ENCODE measurements at regions of chr5 and their contacts with region 1.

Region 1: GRCh38 chr5:82165740-82166530 is 112.2 kb downstream of the RPS23 start:
- DNase-seq: peak; percentile 86 to 87
- ATAC-seq: peak; percentile 100
- H3K4me3 ChIP-seq: no peak overlapping the region
- H3K27ac ChIP-seq: peak overlapping the region; percentile 51 to 76 (median 72)
- H3K4me1 ChIP-seq: peaks cover 14 to 25% of the 10 kb centered on the region in 2 donors
- H3K27me3 ChIP-seq: no peaks in the 10 kb centered on the region
- CTCF ChIP-seq: peak; percentile 65 to 78 (median 70)
- POLR2A ChIP-seq: no peak

Region 2: DNA sequence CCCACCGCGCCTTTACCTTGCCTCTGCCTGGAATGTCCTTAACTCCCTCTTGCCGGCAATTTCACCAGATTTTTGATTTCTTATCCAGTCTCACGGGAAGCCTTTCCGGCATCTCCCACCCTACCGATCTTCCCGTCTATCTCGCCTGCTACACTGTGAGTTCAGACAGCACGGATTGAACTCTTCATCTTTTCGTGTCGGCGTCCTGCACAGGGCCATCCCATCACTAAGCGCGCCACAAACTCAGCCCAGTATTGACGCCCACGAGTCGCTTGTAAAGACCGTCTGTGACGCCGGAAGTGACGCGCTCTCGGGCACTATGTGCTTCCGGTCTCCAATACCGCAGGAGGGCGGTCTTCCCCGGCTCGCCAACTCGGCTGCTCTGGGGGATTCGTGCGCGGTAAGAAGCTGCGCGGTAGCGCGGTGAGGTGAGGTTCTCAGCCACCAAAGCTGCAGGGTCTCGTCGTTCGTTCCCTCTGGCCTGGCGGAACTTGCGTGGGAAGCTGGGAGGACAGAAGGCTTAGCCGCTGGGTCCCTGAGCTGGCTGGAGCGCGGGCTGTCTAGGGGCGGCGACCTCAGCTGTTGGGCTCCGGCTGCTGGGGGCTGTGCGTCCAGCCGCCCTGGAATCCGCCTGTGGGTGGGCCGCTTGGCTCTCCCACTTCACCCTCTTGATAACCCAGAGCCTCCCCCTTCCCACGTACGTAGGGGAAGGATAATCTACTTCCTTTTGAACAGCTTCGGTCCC is 864.5 kb before region 1 on chr5 and contains the start of gene ZCCHC9:
- in situ Hi-C with region 1: no loop called
- intact Hi-C with region 1: loop called (anchors 5 kb)
- DNase-seq: peak; percentile 89
- ATAC-seq: peak; percentile 97 to 98
- H3K4me3 ChIP-seq: peak within 1 kb of the TSS; percentile 83 to 96 (median 87)
- H3K27ac ChIP-seq: peak within 1 kb of the TSS; percentile 87 to 93 (median 88)
- H3K4me1 ChIP-seq: peaks cover 28 to 30% of the 10 kb centered on the region in 2 donors
- H3K27me3 ChIP-seq: no peaks in the 10 kb centered on the region
- CTCF ChIP-seq: peak in 3 of 5 experiments; percentile 13 to 37 (median 31)
- POLR2A ChIP-seq: peak; percentile 58 to 65
- total RNA-seq, gene ZCCHC9: 8.0 to 15.7 (median 12.3) TPM

Region 3: GRCh38 chr5:81751009-81751835 is 414.7 kb before region 1 on chr5 and contains the start of gene SSBP2:
- in situ Hi-C with region 1: loop called in 1 of 4 experiments (anchors 25 kb)
- intact Hi-C with region 1: loop called (anchors 5 kb)
- DNase-seq: peak; percentile 98 to 100
- ATAC-seq: peak; percentile 76 to 81
- H3K4me3 ChIP-seq: peak within 1 kb of the TSS; percentile 81 to 84 (median 82)
- H3K27ac ChIP-seq: peak within 1 kb of the TSS; percentile 86 to 99 (median 98)
- H3K4me1 ChIP-seq: peaks cover 41 to 59% of the 10 kb centered on the region in 2 donors
- H3K27me3 ChIP-seq: no peaks in the 10 kb centered on the region
- CTCF ChIP-seq: peak in 1 of 5 experiments; percentile 30
- POLR2A ChIP-seq: peak; percentile 68 to 84
- total RNA-seq, gene SSBP2: 30.4 to 66.5 (median 40.5) TPM

Region 4: GRCh38 chr5:81895307-81895706 is 270.6 kb before region 1 on chr5:
- in situ Hi-C with region 1: no loop called
- intact Hi-C with region 1: no loop called
- DNase-seq: no peak
- ATAC-seq: no peak
- H3K4me3 ChIP-seq: no peak overlapping the region
- H3K27ac ChIP-seq: no peak overlapping the region
- H3K4me1 ChIP-seq: no peaks in the 10 kb centered on the region
- H3K27me3 ChIP-seq: no peaks in the 10 kb centered on the region
- CTCF ChIP-seq: no peak
- POLR2A ChIP-seq: no peak

Region 5: GRCh38 chr5:81971712-81972495 is 194.0 kb before region 1 on chr5 and contains the start of gene ATG10:
- in situ Hi-C with region 1: no loop called
- intact Hi-C with region 1: loop called (anchors 2 kb)
- DNase-seq: peak; percentile 79 to 87
- ATAC-seq: peak; percentile 94 to 96
- H3K4me3 ChIP-seq: peak within 1 kb of the TSS; percentile 79 to 93 (median 82)
- H3K27ac ChIP-seq: peak within 1 kb of the TSS; percentile 93 to 99 (median 98)
- H3K4me1 ChIP-seq: peaks cover 0 to 8% of the 10 kb centered on the region in 2 donors
- H3K27me3 ChIP-seq: no peaks in the 10 kb centered on the region
- CTCF ChIP-seq: peak in 1 of 5 experiments; percentile 9
- POLR2A ChIP-seq: peak; percentile 95 to 97
- total RNA-seq, gene ATG10: 2.9 to 8.5 (median 6.0) TPM